Motor neuron (in vitro differentiated cells): ENCODE measurements at regions of chr1 and their contacts with region 1.

Region 1: GRCh38 chr1:147748676-147749350 is 11.6 kb downstream of the GJA5 start:
- ATAC-seq: peak in 1 of 8 experiments; percentile 21
- H3K4me3 ChIP-seq: no peak overlapping the region
- H3K27ac ChIP-seq: no peak overlapping the region
- H3K4me1 ChIP-seq: peaks cover 0 to 10% of the 10 kb centered on the region in 2 donors

Region 2: GRCh38 chr1:147264158-147264768 is 484.6 kb before region 1 on chr1:
- in situ Hi-C with region 1: no loop called
- ATAC-seq: no peak
- H3K4me3 ChIP-seq: no peak overlapping the region
- H3K27ac ChIP-seq: no peak overlapping the region
- H3K4me1 ChIP-seq: no peaks in the 10 kb centered on the region

Region 3: GRCh38 chr1:147611021-147611426 is 137.8 kb before region 1 on chr1:
- in situ Hi-C with region 1: no loop called
- ATAC-seq: no peak
- H3K4me3 ChIP-seq: no peak overlapping the region
- H3K27ac ChIP-seq: no peak overlapping the region
- H3K4me1 ChIP-seq: no peaks in the 10 kb centered on the region

Region 4: DNA sequence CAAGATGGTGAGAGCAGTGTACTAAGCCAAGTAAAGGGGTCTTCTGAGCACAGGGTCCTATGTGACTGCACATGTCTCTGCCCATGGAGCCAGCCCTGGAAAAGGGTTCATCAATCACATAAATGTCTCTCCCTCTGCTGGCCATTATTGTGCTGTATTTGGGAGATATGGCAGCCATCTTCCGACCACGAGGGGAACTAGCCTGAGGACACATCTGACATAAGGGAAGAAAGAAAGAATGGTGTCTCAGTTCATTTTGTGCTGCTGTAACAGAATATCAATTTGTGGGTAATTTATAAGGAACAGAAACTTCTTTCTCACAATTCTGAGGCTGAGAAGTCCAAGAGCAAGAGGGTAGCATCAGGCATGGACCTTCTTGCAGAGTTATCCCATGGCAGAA is 66.7 kb after region 1 on chr1:
- in situ Hi-C with region 1: no loop called
- ATAC-seq: no peak
- H3K4me3 ChIP-seq: no peak overlapping the region
- H3K27ac ChIP-seq: no peak overlapping the region
- H3K4me1 ChIP-seq: no peaks in the 10 kb centered on the region

Region 5: GRCh38 chr1:147850759-147851508 is 102.1 kb after region 1 on chr1:
- in situ Hi-C with region 1: loop called in 1 of 9 experiments (anchors 25 kb)
- ATAC-seq: peak in 2 of 8 experiments; percentile 50 to 58
- H3K4me3 ChIP-seq: no peak overlapping the region
- H3K27ac ChIP-seq: no peak overlapping the region
- H3K4me1 ChIP-seq: peaks cover 5 to 21% of the 10 kb centered on the region in 2 donors